ENCODE measurements at regions of chr1 and their contacts with region 1.

Region 1: GRCh38 chr1:224434691-224435317 is at the start of gene WDR26:
- DNase-seq: peak; percentile 90
- H3K4me3 Mint-ChIP-seq: peak within 1 kb of the TSS; percentile 95
- H3K27ac Mint-ChIP-seq: peak within 1 kb of the TSS; percentile 97
- H3K4me1 Mint-ChIP-seq: peaks cover 51% of the 10 kb centered on the region
- H3K27me3 Mint-ChIP-seq: no peaks in the 10 kb centered on the region
- total RNA-seq, gene WDR26: 69.2 to 72.2 TPM

Region 2: DNA sequence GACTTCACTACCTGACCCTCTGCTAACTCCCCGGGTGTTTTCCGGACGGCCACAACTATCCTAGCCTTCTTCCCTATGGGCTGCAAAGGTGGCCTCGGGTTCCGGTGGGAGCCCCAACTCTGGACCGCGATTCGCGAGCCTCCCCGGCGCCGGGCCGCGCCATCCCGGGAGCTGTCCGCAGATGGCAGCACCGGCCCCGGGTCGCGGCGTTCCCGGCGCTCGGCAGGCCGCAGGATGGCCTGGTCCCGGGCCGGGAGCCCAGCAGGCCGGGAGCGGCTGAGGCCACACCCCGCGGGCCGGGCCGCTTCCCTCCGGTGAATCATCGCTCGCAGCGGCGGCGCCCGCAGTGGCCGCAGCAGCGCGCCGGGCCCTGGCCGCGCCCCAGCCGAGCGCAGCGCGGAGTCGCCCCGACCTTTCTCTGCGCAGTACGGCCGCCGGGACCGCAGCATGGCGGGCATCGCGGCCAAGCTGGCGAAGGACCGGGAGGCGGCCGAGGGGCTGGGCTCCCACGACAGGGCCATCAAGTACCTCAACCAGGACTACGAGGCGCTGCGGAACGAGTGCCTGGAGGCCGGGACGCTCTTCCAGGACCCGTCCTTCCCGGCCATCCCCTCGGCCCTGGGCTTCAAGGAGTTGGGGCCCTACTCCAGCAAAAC is 722.5 kb before region 1 on chr1 and contains the start of gene CAPN2:
- CTCF ChIA-PET with region 1: no interaction called
- POLR2A ChIA-PET with region 1: no interaction called
- intact Hi-C with region 1: loop called (anchors 10 kb)
- DNase-seq: peak; percentile 75
- H3K4me3 Mint-ChIP-seq: peak within 1 kb of the TSS; percentile 85
- H3K27ac Mint-ChIP-seq: peak within 1 kb of the TSS; percentile 80
- H3K4me1 Mint-ChIP-seq: peaks cover 58% of the 10 kb centered on the region
- H3K27me3 Mint-ChIP-seq: no peaks in the 10 kb centered on the region
- total RNA-seq, gene CAPN2: 61.2 to 64.5 TPM

Region 3: DNA sequence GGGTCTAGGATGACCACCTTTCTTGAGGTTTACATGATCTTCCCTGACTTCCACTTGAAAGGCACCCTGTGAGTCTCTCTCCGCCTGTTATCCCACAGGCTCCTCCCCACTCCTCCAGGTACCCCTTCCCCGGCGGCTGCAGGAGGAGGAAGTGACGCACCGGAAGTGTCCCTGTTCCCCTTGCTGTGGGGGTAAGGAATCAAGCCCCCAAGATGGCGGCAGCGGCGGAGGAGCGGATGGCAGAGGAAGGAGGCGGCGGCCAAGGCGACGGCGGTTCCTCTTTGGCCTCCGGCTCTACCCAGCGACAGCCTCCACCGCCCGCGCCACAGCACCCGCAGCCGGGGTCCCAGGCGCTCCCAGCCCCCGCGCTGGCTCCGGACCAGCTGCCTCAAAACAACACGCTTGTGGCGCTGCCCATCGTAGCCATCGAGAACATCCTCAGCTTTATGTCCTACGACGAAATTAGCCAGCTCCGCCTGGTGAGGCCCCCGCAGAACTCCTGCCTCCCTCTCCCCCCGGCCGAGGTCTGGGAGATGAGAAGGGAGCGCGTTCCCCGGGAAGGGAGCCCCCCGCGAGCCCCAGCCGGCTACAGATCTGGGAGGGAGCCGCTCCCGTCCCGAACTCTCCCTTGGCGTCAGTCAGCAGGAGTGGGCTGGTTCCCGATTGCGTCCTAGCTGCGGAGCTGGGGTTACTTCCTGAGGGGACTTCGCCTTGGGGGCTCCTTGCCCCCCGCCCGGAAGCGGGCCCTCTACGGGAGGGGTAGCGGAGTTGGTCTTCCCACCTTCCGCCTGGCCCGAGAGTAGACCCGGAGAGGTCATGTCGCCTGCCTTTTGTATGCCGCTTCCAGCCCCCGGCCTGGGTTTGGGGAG is 320.7 kb before region 1 on chr1 and contains the start of gene FBXO28:
- CTCF ChIA-PET with region 1: interaction called, 3 read pairs
- POLR2A ChIA-PET with region 1: no interaction called
- intact Hi-C with region 1: loop called (anchors 1 kb)
- DNase-seq: peak; percentile 97
- H3K4me3 Mint-ChIP-seq: peak within 1 kb of the TSS; percentile 78
- H3K27ac Mint-ChIP-seq: peak within 1 kb of the TSS; percentile 86
- H3K4me1 Mint-ChIP-seq: peaks cover 27% of the 10 kb centered on the region
- H3K27me3 Mint-ChIP-seq: no peaks in the 10 kb centered on the region
- total RNA-seq, gene FBXO28: 19.5 to 20.0 TPM

Region 4: GRCh38 chr1:224329842-224330753 is 104.7 kb before region 1 on chr1 and contains the start of gene NVL:
- CTCF ChIA-PET with region 1: interaction called, 4 read pairs
- POLR2A ChIA-PET with region 1: interaction called, 4 read pairs
- intact Hi-C with region 1: loop called (anchors 1 kb)
- DNase-seq: peak; percentile 88
- H3K4me3 Mint-ChIP-seq: peak within 1 kb of the TSS; percentile 94
- H3K27ac Mint-ChIP-seq: peak within 1 kb of the TSS; percentile 97
- H3K4me1 Mint-ChIP-seq: peaks cover 42% of the 10 kb centered on the region
- H3K27me3 Mint-ChIP-seq: no peaks in the 10 kb centered on the region
- total RNA-seq, gene NVL: 32.5 to 38.0 TPM

Region 5: GRCh38 chr1:224377676-224378006 is 57.2 kb before region 1 on chr1:
- CTCF ChIA-PET with region 1: interaction called, 3 read pairs
- POLR2A ChIA-PET with region 1: interaction called, 7 read pairs
- intact Hi-C with region 1: loop called (anchors 1 kb)
- DNase-seq: peak; percentile 67
- H3K4me3 Mint-ChIP-seq: no peak overlapping the region
- H3K27ac Mint-ChIP-seq: peak overlapping the region; percentile 46
- H3K4me1 Mint-ChIP-seq: peaks cover 91% of the 10 kb centered on the region
- H3K27me3 Mint-ChIP-seq: no peaks in the 10 kb centered on the region

Region 6: GRCh38 chr1:224497714-224498573 is 63.1 kb after region 1 on chr1:
- CTCF ChIA-PET with region 1: no interaction called
- POLR2A ChIA-PET with region 1: interaction called, 6 read pairs
- intact Hi-C with region 1: loop called (anchors 2 kb)
- DNase-seq: peak; percentile 87
- H3K4me3 Mint-ChIP-seq: peak overlapping the region; percentile 66
- H3K27ac Mint-ChIP-seq: peak overlapping the region; percentile 87
- H3K4me1 Mint-ChIP-seq: peaks cover 33% of the 10 kb centered on the region
- H3K27me3 Mint-ChIP-seq: no peaks in the 10 kb centered on the region

Region 7: GRCh38 chr1:224615861-224616755 is 181.3 kb after region 1 on chr1 and contains the start of gene CNIH3:
- CTCF ChIA-PET with region 1: no interaction called
- POLR2A ChIA-PET with region 1: no interaction called
- intact Hi-C with region 1: no loop called
- DNase-seq: peak; percentile 44
- H3K4me3 Mint-ChIP-seq: peak within 1 kb of the TSS; percentile 59
- H3K27ac Mint-ChIP-seq: no peak within 1 kb of the TSS
- H3K4me1 Mint-ChIP-seq: peaks cover 33% of the 10 kb centered on the region
- H3K27me3 Mint-ChIP-seq: peaks cover 45% of the 10 kb centered on the region
- total RNA-seq, gene CNIH3: 0.63 to 1.00 TPM

Region 8: GRCh38 chr1:224996266-224996665 is 561.5 kb after region 1 on chr1:
- CTCF ChIA-PET with region 1: no interaction called
- POLR2A ChIA-PET with region 1: no interaction called
- intact Hi-C with region 1: no loop called
- DNase-seq: no peak
- H3K4me3 Mint-ChIP-seq: no peak overlapping the region
- H3K27ac Mint-ChIP-seq: no peak overlapping the region
- H3K4me1 Mint-ChIP-seq: no peaks in the 10 kb centered on the region
- H3K27me3 Mint-ChIP-seq: peaks cover 2% of the 10 kb centered on the region

Region 9: DNA sequence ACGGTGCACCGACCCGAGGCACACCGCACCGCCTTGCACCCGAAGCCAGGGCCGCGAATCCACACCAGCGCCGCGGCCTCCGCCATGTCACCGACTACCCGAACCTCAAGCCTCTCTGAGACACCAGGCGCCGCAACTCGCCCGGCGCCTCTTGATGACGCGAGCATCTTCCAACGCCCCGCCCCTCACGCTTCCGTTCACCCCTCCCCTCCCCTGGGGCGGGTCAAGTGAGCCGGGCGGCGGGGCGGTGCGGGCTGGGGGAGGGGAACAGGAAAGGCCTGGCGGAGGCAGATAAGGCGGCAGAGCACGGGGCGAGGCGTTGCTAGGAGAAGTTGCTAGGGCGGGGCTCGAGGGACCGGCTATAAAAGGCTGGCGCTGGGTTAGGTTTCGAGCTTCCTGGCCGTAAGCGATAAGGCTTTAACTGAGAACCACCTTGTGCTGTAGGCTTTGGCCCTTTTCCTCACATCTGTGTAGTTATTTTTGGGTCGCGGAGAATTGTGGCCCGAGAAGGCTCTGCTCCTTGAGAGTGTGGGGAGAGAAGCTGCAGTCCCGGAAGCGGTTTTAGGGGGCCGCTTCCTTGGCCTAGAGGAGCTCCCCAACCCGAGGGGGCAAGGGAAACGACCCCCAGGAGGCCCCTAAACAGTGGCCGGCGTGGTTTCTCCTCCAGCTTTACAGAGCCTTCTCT is 1564.6 kb after region 1 on chr1 and contains the start of gene SDE2:
- CTCF ChIA-PET with region 1: no interaction called
- POLR2A ChIA-PET with region 1: no interaction called
- intact Hi-C with region 1: loop called (anchors 10 kb)
- DNase-seq: peak; percentile 100
- H3K4me3 Mint-ChIP-seq: peak within 1 kb of the TSS; percentile 100
- H3K27ac Mint-ChIP-seq: peak within 1 kb of the TSS; percentile 96
- H3K4me1 Mint-ChIP-seq: peaks cover 66% of the 10 kb centered on the region
- H3K27me3 Mint-ChIP-seq: no peaks in the 10 kb centered on the region
- total RNA-seq, gene SDE2: 18.0 to 18.2 TPM

Measured in activated CD4-positive, alpha-beta memory T cell treated with anti-CD3 and anti-CD28 coated beads for 36 hours (primary cell).